Activated CD8-positive, alpha-beta memory T cell treated with anti-CD3 and anti-CD28 coated beads, Interleukin-2, amount 10 ng/mL, durations not matched to agents 7 days and 5 days (primary cell): ENCODE measurements at regions of chr17 and their contacts with region 1.

Region 1: GRCh38 chr17:47789611-47790561 is 31.7 kb downstream of the OSBPL7 start:
- DNase-seq: peak; percentile 75
- ATAC-seq: peak; percentile 97
- H3K4me3 Mint-ChIP-seq: peak overlapping the region; percentile 59
- H3K27ac Mint-ChIP-seq: no peak overlapping the region
- H3K4me1 Mint-ChIP-seq: peaks cover 10% of the 10 kb centered on the region
- H3K27me3 Mint-ChIP-seq: peaks cover 77% of the 10 kb centered on the region

Region 2: GRCh38 chr17:47663912-47664625 is 125.8 kb before region 1 on chr17:
- CTCF ChIA-PET with region 1: interaction called, 30 read pairs
- DNase-seq: peak; percentile 76
- ATAC-seq: peak; percentile 61
- H3K4me3 Mint-ChIP-seq: no peak overlapping the region
- H3K27ac Mint-ChIP-seq: peak overlapping the region; percentile 72
- H3K4me1 Mint-ChIP-seq: peaks cover 51% of the 10 kb centered on the region
- H3K27me3 Mint-ChIP-seq: no peaks in the 10 kb centered on the region

Region 3: DNA sequence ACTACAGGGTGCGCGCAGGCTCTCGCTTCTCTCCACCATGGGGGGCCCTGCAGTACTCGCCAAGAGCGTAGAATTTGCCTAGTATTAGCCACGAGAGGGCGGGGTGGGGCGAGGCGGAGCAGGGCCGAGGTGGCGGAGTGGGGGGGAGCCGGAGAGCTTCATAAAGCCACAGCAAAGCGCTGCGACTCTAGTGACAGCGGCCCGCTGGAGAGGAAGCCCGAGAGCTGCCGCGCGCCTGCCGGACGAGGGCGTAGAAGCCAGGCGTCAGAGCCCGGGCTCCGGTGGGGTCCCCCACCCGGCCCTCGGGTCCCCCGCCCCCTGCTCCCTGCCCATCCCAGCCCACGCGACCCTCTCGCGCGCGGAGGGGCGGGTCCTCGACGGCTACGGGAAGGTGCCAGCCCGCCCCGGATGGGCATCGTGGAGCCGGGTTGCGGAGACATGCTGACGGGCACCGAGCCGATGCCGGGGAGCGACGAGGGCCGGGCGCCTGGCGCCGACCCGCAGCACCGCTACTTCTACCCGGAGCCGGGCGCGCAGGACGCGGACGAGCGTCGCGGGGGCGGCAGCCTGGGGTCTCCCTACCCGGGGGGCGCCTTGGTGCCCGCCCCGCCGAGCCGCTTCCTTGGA is 56.7 kb before region 1 on chr17 and contains the start of gene TBX21:
- CTCF ChIA-PET with region 1: interaction called, 13 read pairs
- DNase-seq: peak; percentile 97
- ATAC-seq: peak; percentile 82
- H3K4me3 Mint-ChIP-seq: peak within 1 kb of the TSS; percentile 93
- H3K27ac Mint-ChIP-seq: peak within 1 kb of the TSS; percentile 99
- H3K4me1 Mint-ChIP-seq: peaks cover 67% of the 10 kb centered on the region
- H3K27me3 Mint-ChIP-seq: no peaks in the 10 kb centered on the region
- total RNA-seq, gene TBX21: 59.0 to 68.4 TPM

Region 4: DNA sequence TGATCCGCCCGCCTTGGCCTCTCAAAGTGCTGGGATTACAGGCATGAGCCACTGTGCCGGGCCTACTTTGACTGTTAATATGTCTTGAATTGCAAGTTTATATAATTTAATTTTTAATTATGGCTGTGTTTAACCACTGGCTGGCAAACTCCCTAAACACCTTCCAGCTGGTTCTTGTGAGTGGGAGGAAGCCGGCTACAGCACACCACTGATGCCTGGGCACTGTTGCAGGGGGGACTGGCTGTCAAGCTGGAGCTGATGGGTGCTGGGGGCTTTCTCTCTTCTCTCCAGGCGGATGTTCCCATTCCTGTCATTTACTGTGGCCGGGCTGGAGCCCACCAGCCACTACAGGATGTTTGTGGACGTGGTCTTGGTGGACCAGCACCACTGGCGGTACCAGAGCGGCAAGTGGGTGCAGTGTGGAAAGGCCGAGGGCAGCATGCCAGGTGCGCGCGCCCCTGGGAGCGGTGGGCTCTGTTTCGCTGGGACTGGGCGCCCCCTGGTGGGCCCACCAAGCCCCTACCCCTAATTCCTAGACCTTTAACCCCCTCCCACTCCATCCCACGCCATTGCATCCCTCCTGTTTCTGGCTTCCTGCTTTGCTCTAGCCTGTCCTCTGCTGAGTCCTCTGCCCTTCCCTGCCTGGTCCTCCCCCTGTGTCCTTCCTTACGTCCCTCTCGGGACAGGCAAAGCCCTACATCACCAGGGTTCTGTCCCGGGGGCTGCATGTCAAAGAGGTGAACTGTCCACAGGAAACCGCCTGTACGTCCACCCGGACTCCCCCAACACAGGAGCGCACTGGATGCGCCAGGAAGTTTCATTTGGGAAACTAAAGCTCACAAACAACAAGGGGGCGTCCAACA is 47.3 kb before region 1 on chr17:
- CTCF ChIA-PET with region 1: interaction called, 10 read pairs
- DNase-seq: no peak
- ATAC-seq: no peak
- H3K4me3 Mint-ChIP-seq: no peak overlapping the region
- H3K27ac Mint-ChIP-seq: peak overlapping the region; percentile 59
- H3K4me1 Mint-ChIP-seq: peaks cover 56% of the 10 kb centered on the region
- H3K27me3 Mint-ChIP-seq: no peaks in the 10 kb centered on the region

Region 5: GRCh38 chr17:47776330-47777197 is 13.3 kb before region 1 on chr17:
- CTCF ChIA-PET with region 1: interaction called, 10 read pairs
- DNase-seq: peak; percentile 55
- ATAC-seq: peak; percentile 84
- H3K4me3 Mint-ChIP-seq: no peak overlapping the region
- H3K27ac Mint-ChIP-seq: no peak overlapping the region
- H3K4me1 Mint-ChIP-seq: no peaks in the 10 kb centered on the region
- H3K27me3 Mint-ChIP-seq: peaks cover 66% of the 10 kb centered on the region

Region 6: GRCh38 chr17:47802341-47803022 is 12.6 kb after region 1 on chr17:
- CTCF ChIA-PET with region 1: interaction called, 10 read pairs
- DNase-seq: peak; percentile 72
- ATAC-seq: peak; percentile 92
- H3K4me3 Mint-ChIP-seq: no peak overlapping the region
- H3K27ac Mint-ChIP-seq: no peak overlapping the region
- H3K4me1 Mint-ChIP-seq: no peaks in the 10 kb centered on the region
- H3K27me3 Mint-ChIP-seq: peaks cover 6% of the 10 kb centered on the region

Region 7: GRCh38 chr17:47889734-47890529 is 100.0 kb after region 1 on chr17:
- CTCF ChIA-PET with region 1: no interaction called
- DNase-seq: peak; percentile 93
- ATAC-seq: peak; percentile 99
- H3K4me3 Mint-ChIP-seq: no peak overlapping the region
- H3K27ac Mint-ChIP-seq: no peak overlapping the region
- H3K4me1 Mint-ChIP-seq: peaks cover 22% of the 10 kb centered on the region
- H3K27me3 Mint-ChIP-seq: no peaks in the 10 kb centered on the region